ENCODE measurements at regions of chr10 and their contacts with region 1.

Region 1: DNA sequence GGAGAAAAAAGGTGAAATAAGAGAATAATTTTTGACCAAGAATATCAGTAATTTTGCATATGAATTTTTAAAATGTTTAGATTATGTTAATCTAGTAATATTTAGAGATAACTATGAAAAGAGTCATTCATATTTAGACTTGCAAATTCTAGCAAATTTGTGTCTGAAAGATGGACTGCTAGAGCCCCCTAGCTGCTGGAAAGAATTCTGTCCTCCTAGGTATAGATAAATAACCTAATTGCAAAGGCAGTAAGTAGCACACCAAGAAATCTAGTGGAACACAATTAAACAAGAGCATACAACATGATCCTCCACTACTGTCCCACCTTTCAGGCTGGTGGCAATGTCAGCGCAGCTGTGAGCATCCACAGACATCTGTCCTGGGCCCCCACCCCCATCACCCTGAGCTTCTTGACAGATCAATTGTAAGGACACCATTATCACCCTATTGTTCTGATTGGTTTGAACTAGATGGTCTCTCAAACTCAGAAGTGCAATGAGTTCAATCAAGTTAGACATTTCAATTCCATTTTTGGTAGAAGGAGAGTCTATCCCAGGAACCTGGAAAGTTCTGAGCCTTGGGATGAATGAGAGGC is 15.0 kb upstream of the GFRA1 start:
- DNase-seq: no peak
- ATAC-seq: peak in 1 of 4 donors; percentile 66
- H3K4me3 ChIP-seq: no peak overlapping the region
- H3K27ac ChIP-seq: no peak overlapping the region
- H3K4me1 ChIP-seq: no peaks in the 10 kb centered on the region
- H3K27me3 ChIP-seq: no peaks in the 10 kb centered on the region
- CTCF ChIP-seq: peak; percentile 59

Region 2: DNA sequence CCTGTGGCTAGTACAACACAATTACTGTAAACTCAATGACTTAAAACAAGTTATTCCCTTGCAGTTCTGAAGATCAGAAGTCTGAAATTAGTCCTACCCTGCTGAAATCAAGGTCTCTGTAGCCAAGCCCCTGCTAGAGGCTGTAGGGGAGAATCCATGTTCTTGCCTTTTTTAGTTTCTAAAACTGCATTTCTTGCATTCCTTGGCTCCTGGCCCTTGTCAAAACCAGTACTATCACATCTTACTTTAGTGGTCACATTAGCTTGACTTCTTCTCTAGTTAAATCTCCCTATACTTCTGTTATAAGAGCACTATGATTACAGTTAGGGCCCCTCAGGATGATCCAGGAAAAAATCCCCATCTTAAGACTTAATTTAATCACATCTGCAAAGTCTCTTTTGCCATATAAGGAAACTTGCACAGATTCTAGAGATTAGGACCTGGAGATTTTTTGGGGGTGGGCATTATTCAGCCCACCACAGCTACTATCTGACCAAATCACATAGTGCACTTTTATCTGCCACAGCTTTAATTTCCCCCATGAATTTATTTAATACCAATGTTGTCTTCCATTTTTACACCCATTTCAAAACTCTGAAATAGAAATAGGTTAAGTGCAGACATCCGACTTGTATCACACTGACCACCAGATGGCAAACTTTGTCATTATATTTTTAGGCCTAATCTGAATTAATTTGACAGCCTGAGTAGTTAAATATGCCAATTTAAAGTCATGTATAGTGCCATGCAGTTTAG is 581.8 kb before region 1 on chr10:
- intact Hi-C with region 1: loop called (anchors 5 to 10 kb)
- DNase-seq: no peak
- ATAC-seq: no peak
- H3K4me3 ChIP-seq: no peak overlapping the region
- H3K27ac ChIP-seq: no peak overlapping the region
- H3K4me1 ChIP-seq: no peaks in the 10 kb centered on the region
- H3K27me3 ChIP-seq: no peaks in the 10 kb centered on the region
- CTCF ChIP-seq: peak; percentile 30

Region 3: DNA sequence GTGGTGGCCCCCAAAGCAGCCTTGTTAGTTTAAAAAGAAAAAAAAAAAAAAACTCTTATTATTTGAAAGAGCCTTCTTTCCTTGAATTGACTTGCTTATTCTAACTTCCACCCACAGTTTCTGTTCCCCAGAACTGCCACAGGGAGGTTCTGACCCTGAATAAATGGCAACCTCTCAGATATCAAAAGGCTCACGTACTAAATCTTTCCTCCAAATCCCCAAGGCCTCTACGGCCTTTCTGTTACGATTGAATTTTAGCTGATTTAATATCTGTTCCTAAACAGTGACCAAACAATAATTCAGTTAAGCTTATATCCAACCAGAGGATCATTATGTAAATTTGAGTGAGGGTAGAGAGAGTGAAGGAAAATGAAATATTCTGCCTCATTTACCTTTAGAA is 497.8 kb before region 1 on chr10:
- intact Hi-C with region 1: loop called in 1 of 2 experiments (anchors 10 kb)
- DNase-seq: no peak
- ATAC-seq: no peak
- H3K4me3 ChIP-seq: no peak overlapping the region
- H3K27ac ChIP-seq: no peak overlapping the region
- H3K4me1 ChIP-seq: no peaks in the 10 kb centered on the region
- H3K27me3 ChIP-seq: no peaks in the 10 kb centered on the region
- CTCF ChIP-seq: no peak

Region 4: GRCh38 chr10:115829521-115830205 is 458.3 kb before region 1 on chr10:
- intact Hi-C with region 1: loop called in 1 of 2 experiments (anchors 10 kb)
- DNase-seq: no peak
- ATAC-seq: no peak
- H3K4me3 ChIP-seq: no peak overlapping the region
- H3K27ac ChIP-seq: no peak overlapping the region
- H3K4me1 ChIP-seq: no peaks in the 10 kb centered on the region
- H3K27me3 ChIP-seq: no peaks in the 10 kb centered on the region
- CTCF ChIP-seq: peak; percentile 10

Region 5: DNA sequence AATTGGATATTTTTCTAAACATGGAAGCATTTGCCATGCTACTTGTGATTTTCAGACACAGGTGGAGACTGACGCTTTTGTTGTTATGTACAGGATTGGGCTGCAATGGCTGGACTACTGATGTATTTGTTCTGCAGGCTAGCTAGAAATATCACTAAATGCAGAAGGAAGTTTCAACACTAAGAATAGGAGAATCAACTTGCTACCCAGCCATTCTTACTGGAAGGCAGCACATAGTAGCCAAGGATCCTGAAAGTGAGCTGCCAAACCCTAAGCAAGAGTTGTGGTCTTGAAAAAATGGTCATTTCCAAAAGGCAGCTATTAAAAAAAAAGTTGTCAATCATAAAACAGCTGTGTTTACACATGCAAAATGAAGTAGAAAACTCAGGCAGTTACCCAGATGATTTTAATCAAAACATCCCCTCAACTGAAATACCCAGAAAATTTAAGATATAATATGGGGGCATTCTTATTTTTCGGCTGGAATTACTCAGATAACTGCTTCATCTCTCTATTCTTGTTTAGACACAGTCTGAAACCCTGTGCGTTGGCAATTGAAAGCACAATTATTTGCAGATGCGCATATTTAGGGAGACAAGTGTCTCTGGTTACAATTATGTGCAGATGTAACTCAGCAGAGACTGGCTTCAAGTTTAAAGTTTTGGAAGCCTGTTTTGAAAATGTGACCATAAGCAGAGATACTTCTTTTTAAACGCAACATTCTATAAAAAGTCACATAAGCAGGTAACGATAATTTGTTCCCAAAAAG is 46.2 kb before region 1 on chr10:
- intact Hi-C with region 1: no loop called
- DNase-seq: no peak
- ATAC-seq: no peak
- H3K4me3 ChIP-seq: no peak overlapping the region
- H3K27ac ChIP-seq: no peak overlapping the region
- H3K4me1 ChIP-seq: no peaks in the 10 kb centered on the region
- H3K27me3 ChIP-seq: peaks cover 0 to 9% (median 0%) of the 10 kb centered on the region in 3 donors
- CTCF ChIP-seq: no peak